ENCODE measurements at regions of chr12 and their contacts with region 1.

Region 1: DNA sequence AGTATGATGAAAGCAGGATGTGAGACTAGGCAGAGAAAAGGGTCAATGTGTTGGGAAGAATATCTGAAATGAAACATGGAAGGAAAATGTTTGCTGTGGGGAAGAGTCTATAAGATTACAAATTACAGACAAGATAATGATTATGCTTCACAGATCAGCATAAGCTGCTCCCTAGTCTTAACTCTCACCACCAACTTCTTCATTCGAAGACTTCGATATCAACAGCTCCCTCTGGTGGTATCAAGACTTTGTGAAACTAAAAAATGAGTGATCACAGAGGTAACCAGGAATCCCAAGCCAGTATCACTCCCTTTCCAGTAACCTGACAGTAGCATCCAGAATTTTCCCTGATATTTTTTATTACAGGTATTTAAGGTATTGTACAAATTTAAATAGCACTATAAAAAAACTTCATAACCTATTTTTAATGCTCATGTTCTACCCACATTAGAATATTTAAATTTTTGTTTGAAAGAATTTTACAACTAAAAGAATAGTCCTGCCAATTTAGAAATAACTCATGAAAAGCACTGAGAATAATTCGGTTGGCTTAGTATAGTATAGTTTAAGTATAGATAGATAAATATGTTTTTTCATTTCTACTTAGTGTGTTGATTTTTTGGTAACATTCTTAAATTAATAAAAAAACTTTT is 84.4 kb downstream of the C2CD5 start:
- DNase-seq: peak in 4 of 5 donors; percentile 41 to 46 (median 44)
- H3K4me3 ChIP-seq: no peak overlapping the region
- H3K4me3 Mint-ChIP-seq: no peak overlapping the region
- H3K27ac ChIP-seq: no peak overlapping the region
- H3K27ac Mint-ChIP-seq: peak overlapping the region in 2 of 7 donors; percentile 5 to 38
- H3K4me1 ChIP-seq: no peaks in the 10 kb centered on the region
- H3K4me1 Mint-ChIP-seq: peaks cover 0 to 4% (median 2%) of the 10 kb centered on the region in 4 donors
- H3K27me3 ChIP-seq: no peaks in the 10 kb centered on the region
- H3K27me3 Mint-ChIP-seq: no peaks in the 10 kb centered on the region

Region 2: DNA sequence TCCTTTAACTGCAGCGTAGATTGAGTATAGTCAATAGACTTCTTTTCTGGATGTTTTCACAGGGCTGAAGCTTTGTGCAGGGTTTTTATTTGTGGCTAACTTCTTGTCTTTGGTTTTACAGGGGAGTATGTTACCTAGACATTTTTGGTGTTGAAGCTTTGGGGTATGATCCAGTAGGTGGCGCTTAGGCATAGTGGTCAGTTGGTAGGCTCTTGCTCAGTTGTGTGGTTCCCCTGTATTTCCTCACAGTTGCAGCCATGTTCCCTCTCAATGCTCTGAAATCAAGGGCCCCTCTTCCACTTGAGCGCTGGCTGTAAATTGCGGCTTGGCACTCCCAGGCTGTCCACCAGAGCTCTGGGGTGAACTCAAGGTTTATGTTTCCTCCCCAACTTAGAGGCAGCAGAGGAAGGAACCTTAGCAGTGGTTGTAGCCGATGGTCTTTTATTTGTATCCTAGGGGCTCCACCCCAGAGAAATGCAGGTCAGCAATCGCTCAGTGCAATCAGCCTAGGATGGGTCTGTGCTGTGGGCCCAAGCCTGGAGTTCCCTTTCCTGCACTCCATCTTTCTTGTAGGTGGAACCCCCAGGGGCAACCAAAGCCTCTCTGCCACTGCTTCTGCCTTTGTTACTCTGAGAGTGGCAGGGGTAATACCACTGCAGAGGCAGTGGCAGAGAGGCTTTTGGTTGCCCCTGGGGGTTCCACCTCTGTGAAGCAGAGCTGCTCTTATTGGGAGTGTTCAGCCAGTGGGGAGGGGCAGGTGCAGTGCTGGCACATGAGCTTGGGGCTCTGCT is 358.8 kb before region 1 on chr12:
- CTCF ChIA-PET with region 1: interaction called, 32 read pairs
- POLR2A ChIA-PET with region 1: interaction called, 3 read pairs
- intact Hi-C with region 1: loop called (anchors 1 kb)
- DNase-seq: peak in 4 of 5 donors; percentile 45 to 55 (median 47)
- H3K4me3 ChIP-seq: no peak overlapping the region
- H3K4me3 Mint-ChIP-seq: peak overlapping the region in 1 of 8 donors; percentile 32
- H3K27ac ChIP-seq: no peak overlapping the region
- H3K27ac Mint-ChIP-seq: peak overlapping the region in 1 of 7 donors; percentile 13
- H3K4me1 ChIP-seq: peaks cover 14% of the 10 kb centered on the region
- H3K4me1 Mint-ChIP-seq: peaks cover 7 to 17% (median 13%) of the 10 kb centered on the region in 4 donors
- H3K27me3 ChIP-seq: no peaks in the 10 kb centered on the region
- H3K27me3 Mint-ChIP-seq: no peaks in the 10 kb centered on the region

Region 3: DNA sequence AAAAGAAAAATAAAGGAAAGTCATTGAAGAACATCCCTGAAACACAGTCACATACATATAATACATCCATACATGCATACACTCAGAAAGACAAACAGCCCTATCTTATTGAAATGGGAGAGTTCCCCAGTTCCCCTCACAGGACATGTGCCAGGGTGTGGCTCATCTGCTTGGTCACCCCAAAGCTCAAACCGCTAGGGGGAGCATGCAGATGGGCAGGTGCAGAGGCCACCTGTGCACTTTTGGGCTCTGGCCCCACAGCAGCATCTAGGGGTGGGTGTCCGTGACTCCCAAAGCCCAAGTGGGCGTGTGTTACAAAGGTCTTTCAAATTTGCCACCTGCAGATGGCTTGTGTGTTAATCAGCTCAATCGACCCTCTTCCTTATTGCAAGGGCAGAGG is 338.7 kb before region 1 on chr12:
- CTCF ChIA-PET with region 1: interaction called, 14 read pairs
- POLR2A ChIA-PET with region 1: no interaction called
- intact Hi-C with region 1: no loop called
- DNase-seq: peak in 4 of 5 donors; percentile 21 to 39 (median 28)
- H3K4me3 ChIP-seq: no peak overlapping the region
- H3K4me3 Mint-ChIP-seq: no peak overlapping the region
- H3K27ac ChIP-seq: no peak overlapping the region
- H3K27ac Mint-ChIP-seq: no peak overlapping the region
- H3K4me1 ChIP-seq: no peaks in the 10 kb centered on the region
- H3K4me1 Mint-ChIP-seq: peaks cover 0 to 6% (median 3%) of the 10 kb centered on the region in 4 donors
- H3K27me3 ChIP-seq: no peaks in the 10 kb centered on the region
- H3K27me3 Mint-ChIP-seq: no peaks in the 10 kb centered on the region

Region 4: GRCh38 chr12:22299294-22299912 is 160.6 kb before region 1 on chr12:
- CTCF ChIA-PET with region 1: no interaction called
- POLR2A ChIA-PET with region 1: no interaction called
- intact Hi-C with region 1: no loop called
- DNase-seq: no peak
- H3K4me3 ChIP-seq: no peak overlapping the region
- H3K4me3 Mint-ChIP-seq: no peak overlapping the region
- H3K27ac ChIP-seq: no peak overlapping the region
- H3K27ac Mint-ChIP-seq: no peak overlapping the region
- H3K4me1 ChIP-seq: no peaks in the 10 kb centered on the region
- H3K4me1 Mint-ChIP-seq: peaks cover 0 to 11% (median 5%) of the 10 kb centered on the region in 4 donors
- H3K27me3 ChIP-seq: no peaks in the 10 kb centered on the region
- H3K27me3 Mint-ChIP-seq: no peaks in the 10 kb centered on the region

Region 5: GRCh38 chr12:22473212-22473611 is 13.2 kb after region 1 on chr12:
- CTCF ChIA-PET with region 1: interaction called, 30 read pairs
- POLR2A ChIA-PET with region 1: no interaction called
- intact Hi-C with region 1: no loop called
- DNase-seq: peak in 1 of 5 donors; percentile 13
- H3K4me3 ChIP-seq: no peak overlapping the region
- H3K4me3 Mint-ChIP-seq: peak overlapping the region in 7 of 8 donors; percentile 13 to 69 (median 55)
- H3K27ac ChIP-seq: no peak overlapping the region
- H3K27ac Mint-ChIP-seq: peak overlapping the region in 5 of 7 donors; percentile 49 to 89 (median 63)
- H3K4me1 ChIP-seq: peaks cover 10% of the 10 kb centered on the region
- H3K4me1 Mint-ChIP-seq: peaks cover 10 to 17% (median 12%) of the 10 kb centered on the region in 4 donors
- H3K27me3 ChIP-seq: no peaks in the 10 kb centered on the region
- H3K27me3 Mint-ChIP-seq: no peaks in the 10 kb centered on the region

Region 6: DNA sequence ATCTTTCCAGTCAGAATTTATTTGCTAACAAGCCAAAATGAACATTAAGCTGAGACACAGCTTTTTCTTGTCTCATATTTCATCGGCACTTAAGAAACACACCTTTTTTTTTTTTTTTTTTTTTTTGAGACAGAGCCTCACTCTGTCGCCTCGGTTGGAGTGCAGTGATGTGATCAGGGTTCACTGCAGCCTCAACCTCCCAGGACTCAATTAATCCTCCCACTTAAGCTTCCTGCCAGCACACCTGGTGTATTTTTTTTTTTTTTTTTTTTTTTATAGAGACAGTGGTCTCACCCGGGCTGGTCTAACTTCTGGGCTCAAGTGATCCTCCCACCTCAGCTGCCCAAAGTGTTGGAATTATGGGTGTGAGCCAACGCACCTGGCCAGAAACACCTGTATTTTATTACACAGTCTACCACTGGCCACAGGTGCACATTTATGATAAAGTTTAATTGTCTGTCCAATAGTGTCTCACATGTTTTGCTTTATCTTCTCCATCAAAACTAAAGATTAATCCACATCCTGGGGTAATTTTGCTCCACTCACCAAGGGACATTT is 21.7 kb after region 1 on chr12:
- CTCF ChIA-PET with region 1: interaction called, 15 read pairs
- POLR2A ChIA-PET with region 1: no interaction called
- intact Hi-C with region 1: no loop called
- DNase-seq: no peak
- H3K4me3 ChIP-seq: no peak overlapping the region
- H3K4me3 Mint-ChIP-seq: no peak overlapping the region
- H3K27ac ChIP-seq: no peak overlapping the region
- H3K27ac Mint-ChIP-seq: peak overlapping the region in 1 of 7 donors; percentile 74
- H3K4me1 ChIP-seq: no peaks in the 10 kb centered on the region
- H3K4me1 Mint-ChIP-seq: peaks cover 5 to 15% (median 11%) of the 10 kb centered on the region in 4 donors
- H3K27me3 ChIP-seq: no peaks in the 10 kb centered on the region
- H3K27me3 Mint-ChIP-seq: no peaks in the 10 kb centered on the region

Region 7: DNA sequence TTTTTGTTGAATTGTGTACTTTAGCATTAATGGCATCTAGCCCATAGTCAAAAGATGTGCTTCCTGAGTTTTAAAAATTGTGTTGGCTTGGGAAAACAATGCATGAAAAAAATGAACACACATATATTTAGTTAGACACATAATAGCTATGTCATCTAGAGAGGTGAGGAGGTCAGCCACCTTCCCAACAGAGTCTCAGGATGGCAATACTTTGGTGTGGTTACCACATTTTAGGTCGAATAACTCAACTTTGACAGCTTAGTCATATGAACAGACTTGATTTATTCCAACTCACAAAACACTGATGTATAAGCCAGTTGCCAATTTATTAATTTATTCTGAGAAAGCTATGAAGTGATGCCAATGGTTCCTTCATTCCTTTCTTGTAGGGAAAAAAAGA is 279.0 kb after region 1 on chr12:
- CTCF ChIA-PET with region 1: no interaction called
- POLR2A ChIA-PET with region 1: no interaction called
- intact Hi-C with region 1: no loop called
- DNase-seq: no peak
- H3K4me3 ChIP-seq: no peak overlapping the region
- H3K4me3 Mint-ChIP-seq: no peak overlapping the region
- H3K27ac ChIP-seq: no peak overlapping the region
- H3K27ac Mint-ChIP-seq: no peak overlapping the region
- H3K4me1 ChIP-seq: no peaks in the 10 kb centered on the region
- H3K4me1 Mint-ChIP-seq: no peaks in the 10 kb centered on the region
- H3K27me3 ChIP-seq: no peaks in the 10 kb centered on the region
- H3K27me3 Mint-ChIP-seq: peaks cover 1 to 5% of the 10 kb centered on the region in 2 donors

Region 8: DNA sequence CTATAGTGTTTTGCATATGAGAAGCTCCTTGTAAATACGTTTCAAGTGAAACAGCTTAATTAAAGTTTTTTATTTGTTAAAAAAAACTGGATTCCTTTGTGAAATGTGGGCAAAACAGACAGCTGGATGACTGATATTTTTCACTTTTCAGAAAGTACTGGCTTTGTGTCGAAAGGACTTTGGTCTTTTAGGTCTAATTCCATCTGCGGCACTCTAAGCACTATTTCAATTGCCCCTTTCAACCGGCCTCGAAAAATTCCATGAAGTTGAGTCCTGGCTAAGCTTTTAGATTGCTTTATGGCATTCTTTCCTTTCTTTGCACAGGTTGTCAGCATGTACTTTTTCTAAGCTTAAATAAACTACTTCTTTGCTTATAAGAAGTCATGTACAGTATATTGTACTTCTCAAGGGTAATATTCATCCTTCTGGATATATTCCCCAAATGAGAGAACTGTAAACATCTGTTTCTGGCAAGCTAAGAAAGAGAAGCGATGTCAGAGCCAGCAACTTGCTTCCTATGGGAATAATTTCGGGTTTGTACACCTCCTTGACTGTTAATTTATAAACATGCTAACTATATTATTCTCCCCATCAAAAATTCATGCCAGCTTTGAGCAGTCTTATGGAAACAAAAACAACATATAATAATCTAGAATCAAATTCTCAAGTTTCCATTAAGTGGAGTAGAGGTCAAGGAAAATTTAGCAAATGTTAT is 776.3 kb after region 1 on chr12:
- CTCF ChIA-PET with region 1: no interaction called
- POLR2A ChIA-PET with region 1: no interaction called
- intact Hi-C with region 1: no loop called
- DNase-seq: no peak
- H3K4me3 ChIP-seq: no peak overlapping the region
- H3K4me3 Mint-ChIP-seq: no peak overlapping the region
- H3K27ac ChIP-seq: no peak overlapping the region
- H3K27ac Mint-ChIP-seq: no peak overlapping the region
- H3K4me1 ChIP-seq: no peaks in the 10 kb centered on the region
- H3K4me1 Mint-ChIP-seq: no peaks in the 10 kb centered on the region
- H3K27me3 ChIP-seq: no peaks in the 10 kb centered on the region
- H3K27me3 Mint-ChIP-seq: no peaks in the 10 kb centered on the region